Ovary (tissue), 10 donors: ENCODE measurements at regions of chr20 and their contacts with region 1.

Region 1: GRCh38 chr20:44080646-44081267 is 106.2 kb downstream of the JPH2 start:
- DNase-seq: peak; percentile 36 to 79 (median 61)
- H3K4me3 ChIP-seq: no peak overlapping the region
- H3K27ac ChIP-seq: no peak overlapping the region
- H3K4me1 ChIP-seq: peaks cover 1% of the 10 kb centered on the region
- H3K27me3 ChIP-seq: no peaks in the 10 kb centered on the region
- CTCF ChIP-seq: peak; percentile 40 to 94 (median 59)
- EP300 ChIP-seq: no peak
- POLR2A ChIP-seq: no peak

Region 2: DNA sequence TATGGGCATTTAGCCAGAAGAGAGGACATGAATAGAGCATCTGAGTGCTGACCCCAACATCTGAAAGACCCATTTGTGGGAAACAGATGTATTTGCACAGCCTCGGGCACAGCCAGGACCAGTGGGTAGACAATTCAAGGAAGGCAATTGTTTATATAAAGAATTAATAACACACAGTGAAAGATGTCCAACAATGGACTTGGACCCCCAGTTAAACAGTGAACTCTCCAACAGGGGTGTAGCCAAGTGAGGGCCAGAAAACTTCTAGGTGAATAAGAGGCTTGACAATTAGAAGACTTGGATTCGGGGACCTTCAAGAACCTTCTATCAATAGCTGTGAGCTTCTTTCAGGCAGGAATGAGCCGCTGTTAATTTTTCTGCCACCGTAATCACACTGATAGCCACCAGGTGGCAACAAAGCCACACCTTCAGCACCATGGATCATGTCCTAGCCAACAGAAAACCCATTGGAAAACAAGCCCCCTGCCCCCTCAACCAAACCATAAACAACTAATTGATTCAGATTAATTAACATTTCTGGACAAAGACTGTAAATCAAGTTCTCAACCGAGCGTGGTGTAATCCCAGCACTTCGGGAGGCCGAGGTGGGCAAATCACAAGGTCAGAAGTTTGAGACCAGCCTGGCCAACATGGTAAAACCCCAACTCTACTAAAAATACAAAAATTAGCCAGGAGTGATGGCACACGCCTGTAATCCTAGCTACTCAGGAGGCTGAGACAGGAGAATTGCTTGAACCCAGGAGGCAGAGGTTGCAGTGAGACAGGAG is 631.8 kb before region 1 on chr20:
- intact Hi-C with region 1: loop called in 2 of 4 experiments (anchors 10 kb)
- DNase-seq: peak in 1 of 5 donors; percentile 25
- H3K4me3 ChIP-seq: no peak overlapping the region
- H3K27ac ChIP-seq: no peak overlapping the region
- H3K4me1 ChIP-seq: no peaks in the 10 kb centered on the region
- H3K27me3 ChIP-seq: no peaks in the 10 kb centered on the region
- CTCF ChIP-seq: peak in 2 of 3 donors; percentile 34 to 53
- EP300 ChIP-seq: no peak
- POLR2A ChIP-seq: no peak

Region 3: GRCh38 chr20:43537921-43538877 is 542.6 kb before region 1 on chr20:
- intact Hi-C with region 1: loop called in 1 of 4 experiments (anchors 10 kb)
- DNase-seq: peak; percentile 27 to 67 (median 58)
- H3K4me3 ChIP-seq: no peak overlapping the region
- H3K27ac ChIP-seq: no peak overlapping the region
- H3K4me1 ChIP-seq: no peaks in the 10 kb centered on the region
- H3K27me3 ChIP-seq: no peaks in the 10 kb centered on the region
- CTCF ChIP-seq: peak; percentile 35 to 59 (median 57)
- EP300 ChIP-seq: no peak
- POLR2A ChIP-seq: no peak

Region 4: DNA sequence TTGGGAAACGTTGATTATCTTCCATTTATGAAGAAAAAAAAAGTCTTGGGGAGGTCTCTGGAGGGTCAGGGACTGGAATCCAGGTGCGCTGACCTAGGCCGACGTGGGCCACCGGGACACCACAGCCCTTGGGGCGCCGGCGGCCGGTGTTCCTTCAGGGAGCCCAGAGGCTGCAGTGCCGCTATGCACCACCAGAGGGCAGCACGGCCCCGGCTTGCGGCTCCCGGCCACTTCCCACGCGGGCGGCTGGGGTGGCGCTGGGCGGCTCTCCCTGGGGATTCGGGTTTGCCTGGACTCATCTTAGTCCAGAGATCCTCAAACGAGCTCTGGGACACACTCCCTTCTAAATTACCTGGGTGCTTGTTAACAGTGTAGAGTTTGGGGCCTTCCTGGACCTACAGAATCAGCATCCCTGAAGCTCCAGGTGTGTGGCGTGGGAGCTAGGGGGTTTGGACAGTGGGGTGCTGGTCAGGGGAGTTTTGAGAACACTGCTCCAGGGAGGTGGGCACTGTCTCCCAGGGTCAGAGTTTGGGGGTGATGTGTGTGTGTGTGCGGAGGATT is 330.9 kb before region 1 on chr20:
- intact Hi-C with region 1: loop called (anchors 5 kb)
- DNase-seq: peak; percentile 30 to 79 (median 46)
- H3K4me3 ChIP-seq: no peak overlapping the region
- H3K27ac ChIP-seq: no peak overlapping the region
- H3K4me1 ChIP-seq: no peaks in the 10 kb centered on the region
- H3K27me3 ChIP-seq: no peaks in the 10 kb centered on the region
- CTCF ChIP-seq: peak in 2 of 3 donors; percentile 51 to 90
- EP300 ChIP-seq: no peak
- POLR2A ChIP-seq: no peak